ENCODE measurements at regions of chr1 and their contacts with region 1.

Region 1: DNA sequence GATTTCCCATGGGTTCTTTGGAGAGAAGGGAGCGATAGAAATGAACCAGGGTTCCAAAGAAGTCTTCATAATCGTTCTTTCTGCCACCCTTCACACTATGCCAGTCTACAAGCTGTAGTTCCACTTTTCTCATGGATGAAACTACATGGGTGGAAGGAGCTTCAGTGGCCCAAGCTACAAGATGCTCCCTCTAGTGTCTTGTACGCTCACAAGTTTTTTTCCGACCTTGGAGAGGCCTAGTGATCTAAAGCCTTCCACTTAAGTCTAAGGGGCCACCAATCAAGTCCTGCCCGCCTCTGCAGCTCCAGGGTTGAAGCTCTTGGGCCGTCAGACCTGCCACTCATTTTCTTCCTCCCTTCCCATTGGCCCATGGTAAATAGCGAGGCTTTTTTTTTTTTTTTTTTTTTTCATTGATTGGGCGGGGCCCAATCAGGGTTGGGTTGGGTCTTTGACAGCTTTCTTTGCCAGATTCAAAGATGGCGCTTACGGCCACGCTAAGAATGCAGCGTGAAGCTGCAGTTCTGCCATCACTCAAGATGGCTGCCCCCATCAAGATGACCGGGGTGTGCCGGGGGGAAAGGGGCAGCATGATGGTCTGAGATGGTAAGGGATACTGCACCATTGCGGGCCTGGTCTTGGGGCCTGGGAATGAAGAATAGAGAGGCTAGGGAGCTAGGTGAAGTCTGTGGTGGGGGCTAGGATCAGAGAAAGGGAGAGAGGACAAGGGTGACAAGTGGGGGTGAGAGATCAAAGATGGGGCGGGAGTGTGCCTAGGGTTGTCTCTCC is at the start of gene TOMM40L:
- DNase-seq: peak; percentile 99
- H3K4me3 ChIP-seq: peak within 1 kb of the TSS; percentile 63
- H3K27me3 ChIP-seq: no peaks in the 10 kb centered on the region
- CTCF ChIP-seq: peak; percentile 76
- polyA plus RNA-seq, gene TOMM40L: 9.6 and 13.1 TPM in 2 replicates

Region 2: GRCh38 chr1:161139765-161140164 is 86.0 kb before region 1 on chr1:
- CTCF ChIA-PET with region 1: no interaction called
- POLR2A ChIA-PET with region 1: no interaction called
- DNase-seq: no peak
- H3K4me3 ChIP-seq: no peak overlapping the region
- H3K27me3 ChIP-seq: no peaks in the 10 kb centered on the region
- CTCF ChIP-seq: peak; percentile 63

Region 3: DNA sequence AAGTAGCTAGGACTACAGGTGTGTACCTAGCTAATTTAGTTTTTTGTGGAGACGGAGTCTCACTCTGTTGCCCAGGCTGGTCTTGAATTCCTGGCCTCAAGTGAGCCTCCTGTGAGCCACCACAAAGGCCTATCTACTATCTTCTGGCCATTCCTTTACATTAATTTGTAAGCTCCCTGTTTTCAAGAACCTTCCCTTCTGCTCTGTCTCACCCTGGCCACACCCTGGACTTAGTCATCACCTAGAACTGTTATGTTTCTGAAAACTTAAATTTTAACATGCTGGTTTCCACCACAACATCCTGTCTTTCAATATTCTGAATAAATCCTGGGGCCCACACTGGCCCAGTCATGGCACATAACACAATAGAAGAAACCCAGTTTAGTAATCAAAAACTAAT is 43.5 kb before region 1 on chr1:
- CTCF ChIA-PET with region 1: interaction called, 10 read pairs
- POLR2A ChIA-PET with region 1: no interaction called
- DNase-seq: no peak
- H3K4me3 ChIP-seq: no peak overlapping the region
- H3K27me3 ChIP-seq: no peaks in the 10 kb centered on the region
- CTCF ChIP-seq: no peak

Region 4: GRCh38 chr1:161201828-161202725 is 23.6 kb before region 1 on chr1 and contains the start of gene NDUFS2:
- CTCF ChIA-PET with region 1: interaction called, 159 read pairs
- POLR2A ChIA-PET with region 1: no interaction called
- DNase-seq: peak; percentile 93
- H3K4me3 ChIP-seq: peak within 1 kb of the TSS; percentile 70
- H3K27me3 ChIP-seq: no peaks in the 10 kb centered on the region
- CTCF ChIP-seq: peak; percentile 39
- polyA plus RNA-seq, gene NDUFS2: 129 TPM in 2 replicates

Region 5: GRCh38 chr1:161250829-161251228 is 25.1 kb after region 1 on chr1:
- CTCF ChIA-PET with region 1: interaction called, 29 read pairs
- POLR2A ChIA-PET with region 1: interaction called, 3 read pairs
- DNase-seq: no peak
- H3K4me3 ChIP-seq: no peak overlapping the region
- H3K27me3 ChIP-seq: no peaks in the 10 kb centered on the region
- CTCF ChIP-seq: no peak

Region 6: DNA sequence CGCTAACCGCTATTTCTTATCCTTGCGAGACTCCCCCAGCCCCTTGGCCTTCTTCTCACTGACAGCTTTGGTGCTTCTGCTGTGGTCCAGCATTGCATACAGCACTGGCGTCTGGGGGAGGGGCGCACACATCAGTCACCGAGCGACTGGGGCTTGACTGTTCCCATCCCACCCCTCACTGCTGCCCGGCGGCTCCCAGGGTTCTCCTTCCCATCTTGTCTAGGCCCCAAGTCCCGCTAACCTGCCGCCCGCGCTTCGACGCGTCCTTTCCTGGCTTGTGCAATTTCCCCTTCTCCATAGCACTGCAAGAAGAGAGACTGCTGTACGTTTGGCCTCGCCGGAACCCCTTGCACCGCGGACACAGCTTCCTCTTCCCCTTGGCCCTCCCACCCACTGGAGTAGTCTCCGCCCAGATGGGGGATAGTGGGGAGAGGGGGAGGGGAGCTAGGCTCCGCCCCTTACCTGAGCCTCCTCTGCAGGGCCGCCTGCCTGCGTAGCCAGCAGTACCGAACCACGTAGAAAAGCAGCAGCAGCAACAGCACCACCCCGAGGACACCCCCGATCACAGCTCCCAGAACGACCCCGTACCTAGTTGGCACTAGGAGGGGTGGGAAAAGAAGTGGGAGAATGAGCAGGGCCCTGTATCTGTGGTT is 80.3 kb after region 1 on chr1:
- CTCF ChIA-PET with region 1: interaction called, 11 read pairs
- POLR2A ChIA-PET with region 1: interaction called, 4 read pairs
- DNase-seq: no peak
- H3K4me3 ChIP-seq: peak overlapping the region; percentile 67
- H3K27me3 ChIP-seq: 0 out of 2 replicates have a peak, but pooled peaks cover 1% of the 10 kb centered on the region
- CTCF ChIP-seq: peak; percentile 36

Region 7: DNA sequence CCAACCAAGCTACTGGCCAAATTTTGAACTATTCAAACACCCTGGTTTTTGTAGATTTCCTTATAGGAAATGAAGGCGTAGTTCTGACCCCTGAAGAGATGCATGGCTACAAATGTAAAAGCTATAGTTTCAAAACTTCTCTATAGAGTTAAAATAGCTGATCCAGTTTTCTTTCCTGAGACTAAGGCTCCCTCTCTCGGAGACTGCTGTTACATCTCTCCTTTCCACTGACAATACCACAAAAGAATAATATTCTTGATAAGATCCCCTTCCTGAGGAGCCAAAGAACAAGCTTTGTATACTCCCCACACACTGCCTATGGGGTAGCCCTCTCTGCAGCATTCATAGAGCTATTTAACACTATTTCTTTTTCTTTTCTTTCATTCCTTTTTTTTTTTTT is 148.6 kb after region 1 on chr1:
- CTCF ChIA-PET with region 1: interaction called, 126 read pairs
- POLR2A ChIA-PET with region 1: no interaction called
- DNase-seq: no peak
- H3K4me3 ChIP-seq: no peak overlapping the region
- H3K27me3 ChIP-seq: no peaks in the 10 kb centered on the region
- CTCF ChIP-seq: peak; percentile 32

Region 8: GRCh38 chr1:161389691-161390558 is 164.2 kb after region 1 on chr1:
- CTCF ChIA-PET with region 1: interaction called, 126 read pairs
- POLR2A ChIA-PET with region 1: no interaction called
- DNase-seq: peak; percentile 65
- H3K4me3 ChIP-seq: peak overlapping the region; percentile 78
- H3K27me3 ChIP-seq: peaks cover 1% of the 10 kb centered on the region; the same call in 1 of the 2 replicates
- CTCF ChIP-seq: no peak